A673 (cell line): ENCODE measurements at regions of chr12 and their contacts with region 1.

Region 1: DNA sequence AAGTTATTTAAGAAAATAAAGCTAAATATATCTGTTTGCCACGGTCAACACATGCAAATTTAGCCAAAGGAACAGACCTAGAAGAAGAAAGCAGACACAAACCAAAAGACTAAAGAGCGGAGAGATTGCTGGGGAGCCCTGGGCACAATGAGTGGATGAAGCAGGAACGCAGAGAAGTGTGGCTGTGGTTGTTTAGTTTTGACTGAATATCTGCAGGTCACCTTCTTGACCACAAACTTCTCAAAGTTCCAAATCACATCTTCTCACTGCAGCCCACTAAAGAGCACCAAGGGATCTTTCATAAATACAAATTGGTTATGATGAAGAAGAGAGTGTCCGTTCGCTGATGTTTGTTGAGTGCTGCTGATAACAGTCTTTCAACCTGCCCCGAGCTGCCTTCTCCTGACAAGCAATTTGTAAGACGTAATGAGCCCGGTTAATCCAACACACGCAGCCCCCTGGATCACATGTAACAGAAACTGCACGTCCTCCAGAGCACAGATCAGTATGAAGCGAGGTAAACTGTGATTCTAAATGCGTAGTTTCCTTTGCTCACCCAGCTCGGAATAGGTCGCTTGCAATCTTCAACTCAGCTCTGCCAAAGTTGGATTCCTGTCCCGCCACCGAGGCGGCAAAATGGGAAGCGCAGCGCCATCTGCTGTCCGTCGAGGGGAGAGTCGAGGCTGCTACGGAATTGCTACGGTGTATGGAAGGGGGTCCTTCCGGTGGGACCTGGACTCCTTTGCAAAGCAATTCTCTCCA is 120.8 kb downstream of the GXYLT1 start:
- DNase-seq: peak; percentile 91
- H3K4me3 ChIP-seq: peak overlapping the region; percentile 34
- H3K27ac ChIP-seq: peak overlapping the region; percentile 54
- H3K4me1 ChIP-seq: peaks cover 14% of the 10 kb centered on the region
- H3K27me3 ChIP-seq: no peaks in the 10 kb centered on the region
- CTCF ChIP-seq: peak; percentile 97

Region 2: GRCh38 chr12:41277116-41277945 is 746.6 kb before region 1 on chr12:
- CTCF ChIA-PET with region 1: interaction called, 7 read pairs
- POLR2A ChIA-PET with region 1: no interaction called
- intact Hi-C with region 1: loop called (anchors 1 kb)
- DNase-seq: peak; percentile 71
- H3K4me3 ChIP-seq: no peak overlapping the region
- H3K27ac ChIP-seq: no peak overlapping the region
- H3K4me1 ChIP-seq: peaks cover 14% of the 10 kb centered on the region
- H3K27me3 ChIP-seq: no peaks in the 10 kb centered on the region
- CTCF ChIP-seq: peak; percentile 72

Region 3: DNA sequence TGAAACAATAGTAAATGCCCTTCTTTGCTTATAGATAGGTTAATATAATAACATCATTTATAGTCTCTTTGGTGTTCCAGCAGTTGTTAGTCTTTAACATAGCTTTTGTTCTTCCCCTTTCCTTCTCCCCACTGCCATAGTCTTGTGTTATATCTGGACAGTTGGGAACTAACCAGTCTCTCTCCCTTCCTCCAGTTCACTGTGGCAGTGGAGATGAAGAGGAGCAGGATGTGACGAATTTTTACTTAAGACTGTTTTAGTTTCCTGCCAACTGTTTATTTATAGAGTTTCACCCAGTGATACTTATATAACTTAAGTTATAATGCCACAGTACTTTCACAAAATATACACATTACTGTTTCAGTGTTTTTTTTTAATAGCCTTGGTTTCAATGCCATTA is 558.4 kb before region 1 on chr12:
- CTCF ChIA-PET with region 1: no interaction called
- POLR2A ChIA-PET with region 1: no interaction called
- intact Hi-C with region 1: no loop called
- DNase-seq: no peak
- H3K4me3 ChIP-seq: no peak overlapping the region
- H3K27ac ChIP-seq: no peak overlapping the region
- H3K4me1 ChIP-seq: no peaks in the 10 kb centered on the region
- H3K27me3 ChIP-seq: no peaks in the 10 kb centered on the region
- CTCF ChIP-seq: no peak

Region 4: DNA sequence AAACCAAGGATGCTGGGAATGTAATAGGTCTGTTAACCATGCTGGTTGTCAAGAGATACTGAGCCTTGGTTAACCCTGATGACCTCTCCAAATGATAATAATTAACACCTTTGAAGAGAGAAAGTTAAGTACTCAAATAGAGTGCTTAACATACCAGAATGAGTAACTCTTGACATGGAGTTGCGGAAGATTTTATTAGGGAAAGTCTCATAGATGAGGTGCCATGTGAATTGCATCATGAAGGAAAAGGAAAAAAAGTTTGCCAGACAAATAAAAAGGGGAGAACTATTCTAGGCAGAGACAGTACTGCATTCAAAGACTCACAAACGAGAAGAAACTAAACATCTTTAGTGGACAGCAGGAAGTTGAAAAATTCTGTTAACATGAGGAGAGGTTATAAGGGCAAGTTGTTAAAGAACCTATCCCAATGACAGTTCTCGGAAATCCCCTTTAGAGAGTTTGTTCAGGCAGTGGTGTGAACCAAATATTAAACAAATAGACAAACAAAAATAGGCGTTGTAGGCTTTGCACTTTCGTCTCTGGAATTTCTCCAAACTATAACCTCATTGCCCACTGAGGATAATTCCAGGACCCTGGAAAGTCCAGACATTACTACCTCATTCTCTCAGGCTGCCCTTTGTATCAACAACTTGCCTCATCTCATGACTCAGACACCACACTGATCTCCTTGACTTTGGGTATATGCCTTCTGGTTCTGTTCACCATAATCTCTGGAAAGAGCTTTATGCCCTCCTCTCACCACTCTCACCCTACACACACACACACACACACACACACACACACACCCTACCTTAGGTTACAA is 314.2 kb before region 1 on chr12:
- CTCF ChIA-PET with region 1: interaction called, 10 read pairs
- POLR2A ChIA-PET with region 1: no interaction called
- intact Hi-C with region 1: no loop called
- DNase-seq: no peak
- H3K4me3 ChIP-seq: no peak overlapping the region
- H3K27ac ChIP-seq: no peak overlapping the region
- H3K4me1 ChIP-seq: no peaks in the 10 kb centered on the region
- H3K27me3 ChIP-seq: no peaks in the 10 kb centered on the region
- CTCF ChIP-seq: no peak

Region 5: DNA sequence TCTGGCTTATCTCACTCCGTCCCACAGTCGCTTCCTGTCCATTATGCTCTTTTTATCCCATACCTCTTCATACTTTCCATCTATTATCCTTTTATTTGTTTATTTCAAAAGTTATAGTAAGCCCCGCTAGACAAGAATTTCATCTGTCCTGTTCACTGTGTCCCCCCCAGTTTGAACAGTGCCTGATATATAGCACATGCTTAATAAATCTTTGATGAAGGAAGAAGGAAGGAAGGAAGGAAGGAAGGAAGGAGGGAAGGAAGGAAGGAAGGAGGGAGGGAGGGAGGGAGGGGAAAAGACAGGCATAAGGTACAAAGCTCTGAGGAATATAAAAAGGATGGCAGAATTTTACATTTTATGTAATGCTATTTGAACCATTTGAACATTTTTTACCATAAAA is 204.0 kb before region 1 on chr12:
- CTCF ChIA-PET with region 1: no interaction called
- POLR2A ChIA-PET with region 1: no interaction called
- intact Hi-C with region 1: loop called (anchors 1 kb)
- DNase-seq: peak; percentile 76
- H3K4me3 ChIP-seq: no peak overlapping the region
- H3K27ac ChIP-seq: peak overlapping the region; percentile 70
- H3K4me1 ChIP-seq: peaks cover 19% of the 10 kb centered on the region
- H3K27me3 ChIP-seq: no peaks in the 10 kb centered on the region
- CTCF ChIP-seq: no peak

Region 6: DNA sequence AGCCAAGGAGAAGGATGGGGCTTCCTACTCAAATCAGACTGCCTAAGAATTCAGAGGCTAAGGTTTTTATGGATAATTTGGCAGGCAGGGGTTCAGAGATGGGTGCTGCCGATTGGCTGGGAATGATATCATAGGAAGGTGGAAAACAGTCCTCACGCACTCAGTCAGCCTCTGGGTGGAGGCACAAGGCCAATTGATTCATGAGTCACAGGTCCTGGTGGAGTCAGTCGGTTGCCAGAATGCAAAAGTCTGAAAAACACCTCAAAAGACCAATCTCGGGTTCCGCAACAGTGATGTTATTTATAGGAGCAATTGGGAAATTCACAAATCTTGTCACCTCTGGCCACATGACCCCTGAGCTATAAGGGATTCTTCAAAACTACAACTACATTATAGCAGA is 15.3 kb after region 1 on chr12:
- CTCF ChIA-PET with region 1: interaction called, 10 read pairs
- POLR2A ChIA-PET with region 1: no interaction called
- intact Hi-C with region 1: no loop called
- DNase-seq: peak; percentile 35
- H3K4me3 ChIP-seq: no peak overlapping the region
- H3K27ac ChIP-seq: no peak overlapping the region
- H3K4me1 ChIP-seq: no peaks in the 10 kb centered on the region
- H3K27me3 ChIP-seq: no peaks in the 10 kb centered on the region
- CTCF ChIP-seq: no peak

Region 7: GRCh38 chr12:42372154-42372791 is 348.4 kb after region 1 on chr12:
- CTCF ChIA-PET with region 1: no interaction called
- POLR2A ChIA-PET with region 1: no interaction called
- intact Hi-C with region 1: loop called (anchors 5 kb)
- DNase-seq: peak; percentile 70
- H3K4me3 ChIP-seq: no peak overlapping the region
- H3K27ac ChIP-seq: no peak overlapping the region
- H3K4me1 ChIP-seq: no peaks in the 10 kb centered on the region
- H3K27me3 ChIP-seq: no peaks in the 10 kb centered on the region
- CTCF ChIP-seq: peak; percentile 82

Region 8: DNA sequence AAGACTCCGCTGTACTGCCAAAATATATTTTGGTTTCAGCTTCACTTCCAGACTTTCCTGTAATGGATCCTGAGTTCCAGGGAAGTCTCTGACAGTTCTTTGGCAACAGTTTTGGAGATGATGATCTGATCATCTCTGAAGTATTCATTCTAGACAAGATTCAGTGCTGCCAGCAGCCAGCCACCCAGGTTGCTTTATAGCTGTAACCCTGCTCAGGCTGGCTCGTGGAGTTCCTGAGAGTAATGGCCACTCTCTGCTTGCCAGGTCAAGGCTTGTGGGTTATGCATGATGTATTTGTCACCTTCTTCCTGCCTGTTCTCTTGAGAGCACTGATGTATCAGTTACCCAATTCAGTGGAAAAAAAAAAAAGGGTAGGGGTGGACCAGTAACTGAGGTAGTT is 426.3 kb after region 1 on chr12:
- CTCF ChIA-PET with region 1: no interaction called
- POLR2A ChIA-PET with region 1: no interaction called
- intact Hi-C with region 1: no loop called
- DNase-seq: no peak
- H3K4me3 ChIP-seq: no peak overlapping the region
- H3K27ac ChIP-seq: no peak overlapping the region
- H3K4me1 ChIP-seq: no peaks in the 10 kb centered on the region
- H3K27me3 ChIP-seq: no peaks in the 10 kb centered on the region
- CTCF ChIP-seq: no peak